Common myeloid progenitor, CD34-positive (primary cell): ENCODE measurements at regions of chr7 and their contacts with region 1.

Region 1: GRCh38 chr7:129210256-129210988 is 14.4 kb upstream of the AHCYL2 start:
- DNase-seq: peak; percentile 56 to 78 (median 70)
- H3K4me3 ChIP-seq: no peak overlapping the region
- H3K27ac ChIP-seq: no peak overlapping the region
- H3K4me1 ChIP-seq: no peaks in the 10 kb centered on the region
- H3K27me3 ChIP-seq: no peaks in the 10 kb centered on the region

Region 2: GRCh38 chr7:129197771-129198170 is 12.7 kb before region 1 on chr7:
- CTCF ChIA-PET with region 1: interaction called, 13 read pairs
- POLR2A ChIA-PET with region 1: no interaction called
- DNase-seq: no peak
- H3K4me3 ChIP-seq: no peak overlapping the region
- H3K27ac ChIP-seq: no peak overlapping the region
- H3K4me1 ChIP-seq: no peaks in the 10 kb centered on the region
- H3K27me3 ChIP-seq: no peaks in the 10 kb centered on the region

Region 3: DNA sequence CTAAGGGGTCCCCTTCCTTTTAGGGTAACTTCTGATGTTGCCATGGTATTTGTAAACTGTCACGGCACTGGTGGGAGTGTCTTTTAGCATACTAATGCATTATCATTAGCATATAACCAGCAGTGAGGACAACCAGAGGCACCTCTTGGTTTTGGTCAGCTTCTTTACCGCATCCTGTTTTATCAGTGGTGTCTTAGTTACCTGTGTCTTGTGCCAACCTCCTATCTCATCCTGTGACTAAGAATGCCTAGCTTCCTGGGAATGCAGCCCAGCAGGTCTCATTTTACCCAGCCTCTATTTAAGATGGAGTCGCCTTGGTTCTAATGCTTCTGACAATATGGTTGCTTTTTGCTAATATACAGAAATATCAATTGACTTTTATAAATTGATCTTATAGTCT is 69.3 kb after region 1 on chr7:
- CTCF ChIA-PET with region 1: no interaction called
- POLR2A ChIA-PET with region 1: no interaction called
- DNase-seq: no peak
- H3K4me3 ChIP-seq: no peak overlapping the region
- H3K27ac ChIP-seq: no peak overlapping the region
- H3K4me1 ChIP-seq: no peaks in the 10 kb centered on the region
- H3K27me3 ChIP-seq: no peaks in the 10 kb centered on the region

Region 4: GRCh38 chr7:129298268-129298893 is 88.0 kb after region 1 on chr7:
- CTCF ChIA-PET with region 1: interaction called, 20 read pairs
- POLR2A ChIA-PET with region 1: interaction called, 4 read pairs
- DNase-seq: peak; percentile 46 to 67 (median 60)
- H3K4me3 ChIP-seq: no peak overlapping the region
- H3K27ac ChIP-seq: no peak overlapping the region
- H3K4me1 ChIP-seq: no peaks in the 10 kb centered on the region
- H3K27me3 ChIP-seq: no peaks in the 10 kb centered on the region